HEK293 (cell line): ENCODE measurements at regions of chrX and their contacts with region 1.

Region 1: GRCh38 chrX:123298026-123298425 is 113.9 kb downstream of the GRIA3 start:
- H3K4me3 ChIP-seq: no peak overlapping the region
- H3K27ac ChIP-seq: no peak overlapping the region
- H3K4me1 ChIP-seq: no peaks in the 10 kb centered on the region
- CTCF ChIP-seq: no peak

Region 2: GRCh38 chrX:123256378-123256777 is 41.6 kb before region 1 on chrX:
- CTCF ChIA-PET with region 1: no interaction called
- POLR2A ChIA-PET with region 1: no interaction called
- H3K4me3 ChIP-seq: no peak overlapping the region
- H3K27ac ChIP-seq: no peak overlapping the region
- H3K4me1 ChIP-seq: no peaks in the 10 kb centered on the region
- CTCF ChIP-seq: no peak

Region 3: GRCh38 chrX:123361371-123361770 is 63.3 kb after region 1 on chrX:
- CTCF ChIA-PET with region 1: no interaction called
- POLR2A ChIA-PET with region 1: interaction called, 10 read pairs
- H3K4me3 ChIP-seq: no peak overlapping the region
- H3K27ac ChIP-seq: no peak overlapping the region
- H3K4me1 ChIP-seq: no peaks in the 10 kb centered on the region
- CTCF ChIP-seq: no peak